ENCODE measurements at regions of chr9 and their contacts with region 1.

Region 1: DNA sequence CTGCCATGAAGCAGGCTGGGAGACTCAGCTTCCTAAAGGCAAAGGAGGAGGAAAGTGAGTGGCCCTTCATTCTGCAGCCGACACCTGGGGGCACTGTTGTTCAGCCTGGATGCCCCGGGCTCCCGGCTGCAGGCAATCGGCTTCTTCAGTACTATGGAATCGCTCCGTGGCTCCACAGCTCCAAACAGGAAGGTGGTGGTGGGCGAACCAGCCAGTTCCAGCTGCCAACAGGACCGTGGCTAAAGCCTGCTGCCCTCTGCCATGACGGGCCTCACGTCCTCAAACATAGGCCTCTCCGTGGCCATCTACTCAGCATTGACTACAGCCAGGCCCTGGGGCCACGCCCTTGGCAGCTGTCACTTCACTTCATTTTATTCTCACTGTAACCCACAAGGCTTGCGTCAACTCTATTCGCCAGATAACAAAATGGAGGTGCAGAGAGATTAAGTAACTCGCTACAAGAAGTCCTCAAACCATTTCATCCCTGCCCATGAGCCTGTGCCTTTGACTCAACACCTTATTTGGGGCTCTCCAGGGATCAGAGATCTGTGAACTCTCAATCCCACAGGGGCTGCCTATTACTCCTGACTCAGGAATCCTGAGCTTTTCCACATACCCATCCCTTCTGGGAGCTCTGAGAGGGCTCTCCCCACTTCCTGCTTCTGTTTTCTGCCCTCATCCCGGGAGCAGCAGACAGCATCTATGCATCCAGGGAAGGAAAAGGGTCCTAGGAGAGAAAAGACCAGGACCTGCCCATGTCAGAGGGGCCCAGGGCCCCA is 38.0 kb downstream of the PAX5 start:
- DNase-seq: peak; percentile 57
- H3K4me3 ChIP-seq: peak overlapping the region; percentile 17
- H3K27ac ChIP-seq: peak overlapping the region; percentile 64
- H3K4me1 ChIP-seq: peaks cover 87% of the 10 kb centered on the region
- CTCF ChIP-seq: peak; percentile 84

Region 2: GRCh38 chr9:37010180-37010579 is 14.1 kb after region 1 on chr9:
- CTCF ChIA-PET with region 1: interaction called, 3 read pairs
- POLR2A ChIA-PET with region 1: interaction called, 14 read pairs
- intact Hi-C with region 1: no loop called
- DNase-seq: no peak
- H3K4me3 ChIP-seq: peak overlapping the region; percentile 38
- H3K27ac ChIP-seq: peak overlapping the region; percentile 72
- H3K4me1 ChIP-seq: peaks cover 82% of the 10 kb centered on the region
- CTCF ChIP-seq: no peak

Region 3: GRCh38 chr9:37309136-37309535 is 313.0 kb after region 1 on chr9:
- CTCF ChIA-PET with region 1: no interaction called
- POLR2A ChIA-PET with region 1: no interaction called
- intact Hi-C with region 1: loop called (anchors 5 kb)
- DNase-seq: peak; percentile 54
- H3K4me3 ChIP-seq: no peak overlapping the region
- H3K27ac ChIP-seq: peak overlapping the region; percentile 19
- H3K4me1 ChIP-seq: peaks cover 39% of the 10 kb centered on the region
- CTCF ChIP-seq: peak; percentile 74